ENCODE measurements at regions of chr19 and their contacts with region 1.

Region 1: DNA sequence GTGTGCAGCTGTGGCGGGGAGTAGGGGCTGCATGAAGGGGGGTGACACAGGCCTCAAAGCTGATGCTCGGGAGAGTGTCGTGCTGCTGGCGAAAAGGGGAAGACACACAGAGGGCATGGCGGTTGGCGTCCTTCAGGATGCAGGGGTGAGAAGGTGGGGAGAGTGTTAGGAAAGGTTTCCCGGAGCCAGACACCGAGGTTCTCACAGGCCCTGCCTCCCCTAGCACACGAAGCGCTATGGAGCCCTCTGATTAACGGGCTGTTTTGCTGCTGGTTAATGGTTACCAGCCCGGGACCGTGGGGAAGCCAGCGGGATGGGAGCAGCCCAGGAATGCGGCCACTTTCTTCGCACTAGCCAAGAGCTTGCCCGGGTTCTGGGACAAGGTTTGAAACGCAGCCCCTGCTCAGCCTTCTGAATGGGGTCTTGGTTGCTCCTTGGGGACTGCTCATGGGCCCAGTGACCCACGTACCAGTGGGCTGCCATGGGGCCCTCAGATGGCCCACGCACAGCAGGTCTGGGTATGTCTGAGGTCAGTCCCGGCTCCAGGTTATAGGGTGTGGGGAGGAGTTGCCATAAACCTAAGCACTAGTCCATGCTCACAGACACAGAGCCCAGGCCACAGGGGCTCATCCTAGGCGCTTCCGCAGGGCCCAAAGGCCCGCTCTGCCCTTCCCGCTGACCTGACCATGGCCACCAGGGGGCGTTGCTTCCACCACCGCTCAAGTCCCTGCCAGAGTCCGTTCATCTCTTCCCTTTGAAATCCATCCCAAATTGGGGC is 31.3 kb upstream of the ISYNA1 start:
- DNase-seq: peak; percentile 49
- H3K4me3 ChIP-seq: no peak overlapping the region
- H3K27ac ChIP-seq: no peak overlapping the region
- H3K4me1 ChIP-seq: no peaks in the 10 kb centered on the region
- H3K27me3 ChIP-seq: no peaks in the 10 kb centered on the region
- CTCF ChIP-seq: peak; percentile 86 to 89
- POLR2A ChIP-seq: no peak

Region 2: DNA sequence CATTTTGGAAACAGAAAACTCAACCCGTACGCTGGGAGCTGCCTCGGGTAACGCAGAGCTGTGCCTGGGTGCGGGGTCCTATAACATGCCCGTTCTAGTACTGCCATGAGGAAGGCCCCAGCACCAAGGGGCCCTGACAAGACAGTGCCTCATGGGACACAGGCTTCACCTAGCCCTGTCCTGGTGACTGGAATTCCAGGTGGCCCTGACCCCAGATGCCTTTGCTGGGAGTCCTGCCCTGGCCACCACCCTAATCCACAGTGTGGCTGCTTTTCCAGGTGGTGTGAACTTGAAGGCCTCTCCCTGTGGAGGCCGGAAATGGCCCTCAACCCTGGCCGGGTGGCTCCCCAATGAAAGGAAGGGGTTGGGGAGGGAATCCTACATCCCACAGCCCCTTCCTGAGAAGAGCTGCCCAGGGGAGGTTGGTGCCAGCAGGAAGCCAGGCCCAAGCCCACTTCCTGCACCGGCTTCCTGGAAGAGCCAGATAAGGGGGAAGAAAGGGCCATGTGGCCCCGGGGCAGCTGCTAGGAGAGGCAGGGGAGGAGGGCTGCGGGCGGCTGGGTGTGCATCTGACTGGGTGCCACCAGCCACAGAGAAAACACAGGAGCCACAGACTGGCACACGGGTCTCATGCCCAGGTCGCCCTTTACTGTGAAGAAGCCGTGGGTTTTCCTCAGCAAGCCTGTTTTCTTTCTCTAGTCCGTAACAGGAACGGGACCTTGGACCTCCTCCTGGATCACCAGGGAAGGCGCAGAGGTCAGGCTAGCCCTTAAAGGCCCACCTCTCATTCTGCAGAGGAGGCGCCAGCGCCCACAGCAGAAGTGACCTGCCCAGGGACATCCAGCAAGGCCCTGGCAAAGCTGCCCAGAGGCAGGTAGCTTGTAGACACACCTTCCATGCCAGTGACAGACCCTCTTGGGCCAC is 151.1 kb before region 1 on chr19:
- CTCF ChIA-PET with region 1: no interaction called
- POLR2A ChIA-PET with region 1: no interaction called
- dilution Hi-C with region 1: no loop called
- intact Hi-C with region 1: no loop called
- DNase-seq: peak; percentile 71
- H3K4me3 ChIP-seq: no peak overlapping the region
- H3K27ac ChIP-seq: peak overlapping the region; percentile 33
- H3K4me1 ChIP-seq: peaks cover 48% of the 10 kb centered on the region
- H3K27me3 ChIP-seq: no peaks in the 10 kb centered on the region
- CTCF ChIP-seq: no peak
- POLR2A ChIP-seq: peak; percentile 50

Region 3: DNA sequence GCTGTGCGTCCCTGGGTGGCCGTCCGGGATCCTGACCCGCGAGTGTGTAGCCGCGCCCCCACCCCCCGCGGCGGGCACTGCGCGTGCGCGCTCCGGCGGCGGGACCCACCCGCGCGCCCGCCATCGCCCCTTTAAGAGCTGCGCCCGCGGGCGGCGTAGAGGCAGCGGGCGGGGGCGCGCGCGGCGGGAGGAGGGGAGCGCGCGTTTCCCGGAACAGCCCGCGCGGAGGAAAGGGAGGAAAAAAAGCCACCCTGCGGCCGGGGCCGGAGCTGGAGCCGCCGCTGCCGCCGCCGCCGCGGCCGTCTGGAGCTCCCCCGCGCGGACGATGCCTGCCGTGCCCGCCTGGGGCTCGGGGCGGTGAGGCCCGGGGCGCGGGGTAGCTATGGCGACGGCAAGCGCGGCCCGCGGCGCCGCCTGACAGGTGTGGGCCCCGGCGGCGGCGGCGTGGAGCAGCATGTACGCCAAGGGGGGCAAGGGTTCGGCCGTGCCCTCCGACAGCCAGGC is 50.0 kb before region 1 on chr19 and contains the start of gene SSBP4:
- CTCF ChIA-PET with region 1: no interaction called
- POLR2A ChIA-PET with region 1: no interaction called
- dilution Hi-C with region 1: no loop called
- intact Hi-C with region 1: no loop called
- DNase-seq: peak; percentile 76
- H3K4me3 ChIP-seq: peak within 1 kb of the TSS; percentile 50 to 73 (median 53)
- H3K27ac ChIP-seq: peak within 1 kb of the TSS; percentile 54
- H3K4me1 ChIP-seq: peaks cover 46% of the 10 kb centered on the region
- H3K27me3 ChIP-seq: no peaks in the 10 kb centered on the region
- CTCF ChIP-seq: peak; percentile 19 to 31
- POLR2A ChIP-seq: peak; percentile 49
- total RNA-seq, gene SSBP4: 140 and 151 TPM in 2 replicates

Region 4: DNA sequence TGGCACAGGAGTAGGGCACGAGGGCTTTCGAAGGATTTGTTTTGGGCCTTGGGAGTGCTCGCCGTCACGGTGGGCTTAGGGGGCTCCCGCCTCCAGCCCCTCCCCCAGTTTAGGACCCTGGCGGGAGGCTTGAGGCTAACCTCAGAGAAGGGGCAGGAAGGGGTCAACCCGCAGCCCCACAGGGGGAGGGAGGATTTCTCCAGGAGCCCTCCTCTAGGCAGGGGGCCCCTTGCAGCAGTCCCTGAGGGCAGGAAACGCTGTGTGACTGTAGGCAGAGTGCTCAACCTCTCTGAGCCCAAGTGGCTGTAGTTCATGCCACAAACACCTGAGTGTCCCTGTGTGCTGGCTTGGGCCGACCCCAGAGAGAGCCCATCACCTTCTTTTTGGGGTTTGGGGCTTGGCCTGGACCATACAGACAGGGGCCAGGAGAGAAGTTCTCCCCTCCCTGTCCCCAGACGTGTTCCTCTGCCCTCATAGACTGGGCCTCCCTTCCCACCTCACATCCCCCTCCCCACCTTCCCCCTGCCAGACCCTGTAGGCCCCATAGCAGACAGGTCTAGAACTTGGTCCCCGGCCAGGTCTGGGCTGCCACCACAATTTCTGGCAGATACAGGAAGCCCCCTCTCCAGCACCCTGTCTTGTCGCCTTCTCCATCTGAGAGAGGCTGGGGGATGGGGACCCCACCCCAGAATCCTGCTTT is 39.4 kb before region 1 on chr19:
- CTCF ChIA-PET with region 1: no interaction called
- POLR2A ChIA-PET with region 1: no interaction called
- dilution Hi-C with region 1: no loop called
- intact Hi-C with region 1: no loop called
- DNase-seq: no peak
- H3K4me3 ChIP-seq: no peak overlapping the region
- H3K27ac ChIP-seq: peak overlapping the region; percentile 51
- H3K4me1 ChIP-seq: peaks cover 13% of the 10 kb centered on the region
- H3K27me3 ChIP-seq: no peaks in the 10 kb centered on the region
- CTCF ChIP-seq: no peak
- POLR2A ChIP-seq: no peak

Region 5: GRCh38 chr19:18450931-18451845 is 18.1 kb before region 1 on chr19:
- CTCF ChIA-PET with region 1: interaction called, 127 read pairs
- POLR2A ChIA-PET with region 1: no interaction called
- dilution Hi-C with region 1: no loop called
- intact Hi-C with region 1: no loop called
- DNase-seq: peak; percentile 65
- H3K4me3 ChIP-seq: no peak overlapping the region
- H3K27ac ChIP-seq: no peak overlapping the region
- H3K4me1 ChIP-seq: no peaks in the 10 kb centered on the region
- H3K27me3 ChIP-seq: no peaks in the 10 kb centered on the region
- CTCF ChIP-seq: peak; percentile 97 to 99
- POLR2A ChIP-seq: no peak

Region 6: DNA sequence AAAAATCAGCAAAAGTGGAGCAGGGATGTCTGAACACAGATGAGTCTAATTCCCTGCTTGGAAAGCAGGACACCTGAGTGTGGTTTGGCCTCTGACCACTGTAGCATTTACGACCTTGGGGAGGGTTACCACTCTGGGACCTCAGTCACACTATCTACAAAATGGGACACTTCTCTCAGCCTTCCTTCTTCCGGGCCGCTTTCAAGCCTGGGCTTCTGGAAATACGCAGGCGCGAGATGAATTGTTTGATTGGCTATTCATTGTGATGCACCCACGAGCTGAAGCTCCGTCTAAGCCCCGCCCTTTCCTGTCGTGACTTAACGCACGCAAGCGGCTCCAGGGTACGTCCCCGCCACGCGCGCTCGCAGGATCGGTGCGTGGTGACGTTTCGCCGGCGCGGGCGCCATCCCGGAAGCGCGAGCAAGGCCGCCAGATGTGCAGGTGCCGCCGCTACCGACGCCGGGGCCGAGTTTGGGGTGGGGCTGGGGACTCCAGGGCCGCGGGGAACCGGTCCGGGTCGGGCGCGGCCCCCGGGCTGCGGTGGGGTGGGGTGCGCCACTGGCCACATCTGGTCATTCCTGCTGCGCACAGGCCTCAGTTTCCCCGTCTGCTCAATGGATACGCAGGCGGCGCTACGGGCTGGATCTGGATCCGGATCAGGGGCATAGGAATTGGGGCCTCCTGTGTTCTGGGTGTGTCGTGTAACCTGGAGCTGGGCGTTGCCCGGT is 88.4 kb after region 1 on chr19 and contains the start of gene KXD1:
- CTCF ChIA-PET with region 1: interaction called, 11 read pairs
- POLR2A ChIA-PET with region 1: no interaction called
- dilution Hi-C with region 1: no loop called
- intact Hi-C with region 1: no loop called
- DNase-seq: peak; percentile 98
- H3K4me3 ChIP-seq: peak within 1 kb of the TSS; percentile 56 to 90 (median 81)
- H3K27ac ChIP-seq: peak within 1 kb of the TSS; percentile 84
- H3K4me1 ChIP-seq: peaks cover 28% of the 10 kb centered on the region
- H3K27me3 ChIP-seq: no peaks in the 10 kb centered on the region
- CTCF ChIP-seq: no peak
- POLR2A ChIP-seq: peak; percentile 66
- total RNA-seq, gene KXD1: 127 and 134 TPM in 2 replicates

Region 7: DNA sequence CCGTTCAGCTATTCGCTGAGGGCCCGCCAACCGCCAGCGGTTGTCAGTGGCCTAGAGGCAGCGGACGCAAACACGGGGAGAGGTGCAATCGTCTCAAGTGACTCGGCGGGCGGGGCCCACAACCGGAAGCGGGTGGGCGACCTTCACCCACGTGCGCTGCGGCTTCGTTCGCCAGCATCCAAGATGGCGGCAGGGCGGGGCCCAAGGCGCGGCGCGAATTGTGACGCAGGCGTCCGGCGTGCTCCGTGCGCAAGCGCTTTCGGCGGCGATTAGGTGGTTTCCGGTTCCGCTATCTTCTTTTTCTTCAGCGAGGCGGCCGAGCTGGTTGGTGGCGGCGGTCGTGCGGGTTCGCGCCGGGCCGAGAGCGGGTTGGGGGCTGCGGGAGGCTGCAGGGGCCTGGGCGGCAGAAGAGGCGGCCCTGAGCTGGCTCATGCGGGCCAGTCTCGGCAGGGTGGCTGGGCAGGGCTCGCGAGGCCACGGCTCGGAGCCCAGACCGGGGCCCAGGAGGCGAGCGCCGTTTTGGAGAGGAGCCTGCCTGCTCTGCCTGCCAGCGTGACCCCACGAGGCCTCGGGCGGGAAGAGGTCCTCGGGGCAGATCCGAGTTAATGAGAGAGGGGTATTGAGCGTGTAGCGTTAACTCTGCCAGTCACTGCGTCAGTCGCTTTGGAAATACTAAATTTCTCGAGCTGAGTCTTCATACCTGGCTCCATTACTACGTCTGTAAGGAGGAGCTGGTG is 102.5 kb after region 1 on chr19 and contains the start of gene UBA52:
- CTCF ChIA-PET with region 1: interaction called, 5 read pairs
- POLR2A ChIA-PET with region 1: no interaction called
- dilution Hi-C with region 1: no loop called
- intact Hi-C with region 1: loop called (anchors 5 kb)
- DNase-seq: peak; percentile 98
- H3K4me3 ChIP-seq: peak within 1 kb of the TSS; percentile 66 to 91 (median 68)
- H3K27ac ChIP-seq: peak within 1 kb of the TSS; percentile 60
- H3K4me1 ChIP-seq: peaks cover 16% of the 10 kb centered on the region
- H3K27me3 ChIP-seq: no peaks in the 10 kb centered on the region
- CTCF ChIP-seq: no peak
- POLR2A ChIP-seq: peak; percentile 92
- total RNA-seq, gene UBA52: 1,218 and 1,221 TPM in 2 replicates

Region 8: DNA sequence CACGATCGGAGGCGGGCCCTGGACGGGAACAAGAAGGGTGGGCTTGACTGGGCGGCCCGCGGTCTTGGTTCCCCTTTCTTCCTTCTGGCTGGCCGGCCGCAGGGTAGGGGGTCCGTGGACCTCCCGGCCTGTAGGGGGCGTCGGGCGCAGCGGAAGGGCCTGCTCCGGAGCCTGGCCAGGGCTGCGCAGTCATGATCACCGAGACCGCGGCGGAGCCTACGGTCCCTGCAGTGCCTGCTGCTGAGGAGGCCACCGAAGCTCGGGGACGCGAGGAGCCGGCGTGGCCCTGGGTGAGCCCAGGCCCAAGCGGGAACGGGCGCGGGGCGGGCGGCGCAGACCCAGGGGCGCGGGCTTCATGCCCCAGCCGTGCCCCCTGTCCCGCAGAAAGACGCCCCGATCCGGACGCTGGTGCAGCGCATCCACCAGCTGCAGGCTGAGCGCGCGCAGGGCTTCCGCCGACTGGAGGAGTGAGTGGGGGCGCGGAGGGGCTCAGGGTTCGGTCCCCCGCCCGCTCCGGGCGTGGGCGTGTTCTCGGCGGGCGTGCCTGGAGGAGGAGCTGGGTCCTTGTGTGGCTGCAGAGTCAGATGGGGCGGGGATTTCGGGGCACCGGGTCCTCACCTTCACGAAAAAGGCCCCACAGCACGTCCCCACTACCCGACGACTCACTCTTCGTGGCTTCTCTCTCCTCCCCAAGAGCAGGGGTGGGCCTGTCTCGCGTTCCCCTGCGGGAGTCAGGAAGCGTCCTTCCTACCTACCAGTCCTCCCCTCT is 119.5 kb after region 1 on chr19 and contains the start of gene REX1BD:
- CTCF ChIA-PET with region 1: interaction called, 13 read pairs
- POLR2A ChIA-PET with region 1: no interaction called
- dilution Hi-C with region 1: no loop called
- intact Hi-C with region 1: no loop called
- DNase-seq: peak; percentile 85
- H3K4me3 ChIP-seq: peak within 1 kb of the TSS; percentile 32 to 78 (median 65)
- H3K27ac ChIP-seq: peak within 1 kb of the TSS; percentile 16
- H3K4me1 ChIP-seq: peaks cover 15% of the 10 kb centered on the region
- H3K27me3 ChIP-seq: no peaks in the 10 kb centered on the region
- CTCF ChIP-seq: peak; percentile 95 to 96
- POLR2A ChIP-seq: peak; percentile 87
- total RNA-seq, gene REX1BD: 64.0 and 64.4 TPM in 2 replicates

Region 9: GRCh38 chr19:18675779-18676178 is 206.5 kb after region 1 on chr19:
- CTCF ChIA-PET with region 1: interaction called, 6 read pairs
- POLR2A ChIA-PET with region 1: no interaction called
- dilution Hi-C with region 1: no loop called
- intact Hi-C with region 1: loop called (anchors 2 kb)
- DNase-seq: no peak
- H3K4me3 ChIP-seq: no peak overlapping the region
- H3K27ac ChIP-seq: no peak overlapping the region
- H3K4me1 ChIP-seq: peaks cover 17% of the 10 kb centered on the region
- H3K27me3 ChIP-seq: no peaks in the 10 kb centered on the region
- CTCF ChIP-seq: peak; percentile 33 to 38
- POLR2A ChIP-seq: no peak